OCI-LY7 (cell line): ENCODE measurements at regions of chr15 and their contacts with region 1.

Region 1: GRCh38 chr15:74127260-74127953 is 3.0 kb upstream of the ISLR2 start:
- DNase-seq: peak; percentile 74
- H3K4me3 ChIP-seq: no peak overlapping the region
- H3K27ac ChIP-seq: no peak overlapping the region
- H3K4me1 ChIP-seq: peaks cover 17% of the 10 kb centered on the region
- CTCF ChIP-seq: peak; percentile 80

Region 2: GRCh38 chr15:74302821-74303359 is 175.5 kb after region 1 on chr15:
- CTCF ChIA-PET with region 1: interaction called, 4 read pairs
- POLR2A ChIA-PET with region 1: interaction called, 3 read pairs
- intact Hi-C with region 1: loop called (anchors 1 kb)
- DNase-seq: peak; percentile 45
- H3K4me3 ChIP-seq: no peak overlapping the region
- H3K27ac ChIP-seq: no peak overlapping the region
- H3K4me1 ChIP-seq: no peaks in the 10 kb centered on the region
- CTCF ChIP-seq: peak; percentile 81

Region 3: GRCh38 chr15:74322181-74323076 is 195.0 kb after region 1 on chr15:
- CTCF ChIA-PET with region 1: no interaction called
- POLR2A ChIA-PET with region 1: no interaction called
- intact Hi-C with region 1: loop called (anchors 1 kb)
- DNase-seq: peak; percentile 66
- H3K4me3 ChIP-seq: no peak overlapping the region
- H3K27ac ChIP-seq: no peak overlapping the region
- H3K4me1 ChIP-seq: no peaks in the 10 kb centered on the region
- CTCF ChIP-seq: peak; percentile 91